HCT116 (cell line): ENCODE measurements at regions of chr4 and their contacts with region 1.

Region 1: GRCh38 chr4:73258686-73259570 is at the start of gene ANKRD17:
- DNase-seq: peak; percentile 82
- ATAC-seq: peak; percentile 84
- H3K4me3 ChIP-seq: peak within 1 kb of the TSS; percentile 75 to 84
- H3K27ac ChIP-seq: peak within 1 kb of the TSS; percentile 94
- H3K4me1 ChIP-seq: peaks cover 9 to 12% of the 10 kb centered on the region in 2 experiments; a peak in 3 of 4 replicates
- H3K27me3 ChIP-seq: no peaks in the 10 kb centered on the region
- CTCF ChIP-seq: 0 out of 6 replicates have a peak, but pooled peaks of 1 of the 3 experiments have one; percentile 7
- POLR2A ChIP-seq: peak; percentile 49
- RAD21 ChIP-seq: no peak
- total RNA-seq, gene ANKRD17: 62.1 TPM

Region 2: GRCh38 chr4:73036123-73036522 is 222.8 kb before region 1 on chr4:
- CTCF ChIA-PET with region 1: interaction called, 4 read pairs
- POLR2A ChIA-PET with region 1: no interaction called
- RAD21 ChIA-PET with region 1: no interaction called
- intact Hi-C with region 1: loop called (anchors 5 kb)
- DNase-seq: no peak
- ATAC-seq: no peak
- H3K4me3 ChIP-seq: no peak overlapping the region
- H3K27ac ChIP-seq: no peak overlapping the region
- H3K4me1 ChIP-seq: peaks cover 0 to 3% of the 10 kb centered on the region in 2 experiments; a peak in 1 of 4 replicates
- H3K27me3 ChIP-seq: no peaks in the 10 kb centered on the region
- CTCF ChIP-seq: no peak
- POLR2A ChIP-seq: no peak
- RAD21 ChIP-seq: no peak

Region 3: GRCh38 chr4:73069338-73070073 is 189.4 kb before region 1 on chr4 and contains the start of gene COX18:
- CTCF ChIA-PET with region 1: no interaction called
- POLR2A ChIA-PET with region 1: interaction called, 3 read pairs
- RAD21 ChIA-PET with region 1: no interaction called
- intact Hi-C with region 1: loop called (anchors 1 kb)
- DNase-seq: peak; percentile 97
- ATAC-seq: peak; percentile 92
- H3K4me3 ChIP-seq: peak within 1 kb of the TSS; percentile 82 to 90
- H3K27ac ChIP-seq: peak within 1 kb of the TSS; percentile 78
- H3K4me1 ChIP-seq: peaks cover 4 to 15% of the 10 kb centered on the region in 2 experiments; a peak in 3 of 4 replicates
- H3K27me3 ChIP-seq: no peaks in the 10 kb centered on the region
- CTCF ChIP-seq: no peak
- POLR2A ChIP-seq: peak; percentile 95
- RAD21 ChIP-seq: no peak
- total RNA-seq, gene COX18: 12.5 TPM

Region 4: GRCh38 chr4:73127839-73128453 is 131.0 kb before region 1 on chr4:
- CTCF ChIA-PET with region 1: no interaction called
- POLR2A ChIA-PET with region 1: no interaction called
- RAD21 ChIA-PET with region 1: no interaction called
- intact Hi-C with region 1: loop called (anchors 5 kb)
- DNase-seq: no peak
- ATAC-seq: peak; percentile 91
- H3K4me3 ChIP-seq: no peak overlapping the region
- H3K27ac ChIP-seq: no peak overlapping the region
- H3K4me1 ChIP-seq: no peaks in the 10 kb centered on the region
- H3K27me3 ChIP-seq: no peaks in the 10 kb centered on the region
- CTCF ChIP-seq: peak in 2 of 3 experiments; percentile 15 to 39; a peak in 1 of 6 replicates
- POLR2A ChIP-seq: no peak
- RAD21 ChIP-seq: no peak